Sigmoid colon (tissue), 7 donors: ENCODE measurements at regions of chr5 and their contacts with region 1.

Region 1: GRCh38 chr5:38556599-38557305 is at the start of gene LIFR:
- DNase-seq: peak; percentile 90
- H3K4me3 ChIP-seq: peak within 1 kb of the TSS; percentile 77 to 95 (median 82)
- H3K27ac ChIP-seq: peak within 1 kb of the TSS; percentile 93 to 98 (median 98)
- H3K4me1 ChIP-seq: peaks cover 0 to 29% (median 9%) of the 10 kb centered on the region in 4 donors
- H3K27me3 ChIP-seq: no peaks in the 10 kb centered on the region
- CTCF ChIP-seq: no peak
- EP300 ChIP-seq: peak in 1 of 4 donors; percentile 11
- POLR2A ChIP-seq: peak; percentile 64 to 71
- total RNA-seq, gene LIFR: 43.0 to 79.6 (median 66.5) TPM

Region 2: DNA sequence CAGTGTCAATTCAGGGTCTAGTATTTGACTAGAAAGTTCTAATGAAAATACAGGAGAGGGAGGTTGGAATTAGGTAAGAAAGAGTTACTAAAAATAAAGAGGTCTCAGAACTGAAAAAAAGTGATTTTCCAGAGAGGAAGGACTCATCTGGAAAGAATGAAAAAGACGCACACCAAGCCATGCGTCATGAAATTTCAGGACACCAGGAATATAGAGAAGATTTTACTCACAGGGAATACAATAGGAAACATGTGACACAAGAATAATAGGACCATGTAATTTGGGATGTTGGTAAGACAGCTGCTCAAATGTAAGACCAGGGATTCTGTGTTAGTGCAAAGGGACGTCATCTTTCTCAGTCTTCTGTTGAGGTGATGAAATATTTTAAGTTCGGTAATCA is 941.6 kb before region 1 on chr5:
- intact Hi-C with region 1: loop called (anchors 5 kb)
- DNase-seq: no peak
- H3K4me3 ChIP-seq: no peak overlapping the region
- H3K27ac ChIP-seq: peak overlapping the region; percentile 53 to 83 (median 73)
- H3K4me1 ChIP-seq: peaks cover 0 to 28% (median 17%) of the 10 kb centered on the region in 4 donors
- H3K27me3 ChIP-seq: no peaks in the 10 kb centered on the region
- CTCF ChIP-seq: no peak
- EP300 ChIP-seq: peak; percentile 36 to 90 (median 66)
- POLR2A ChIP-seq: no peak

Region 3: GRCh38 chr5:38441453-38442246 is 115.1 kb before region 1 on chr5:
- intact Hi-C with region 1: loop called (anchors 5 kb)
- DNase-seq: peak; percentile 94
- H3K4me3 ChIP-seq: no peak overlapping the region
- H3K27ac ChIP-seq: no peak overlapping the region
- H3K4me1 ChIP-seq: no peaks in the 10 kb centered on the region
- H3K27me3 ChIP-seq: no peaks in the 10 kb centered on the region
- CTCF ChIP-seq: peak; percentile 90 to 93 (median 91)
- EP300 ChIP-seq: no peak
- POLR2A ChIP-seq: no peak

Region 4: GRCh38 chr5:38467353-38468040 is 89.3 kb before region 1 on chr5:
- intact Hi-C with region 1: loop called (anchors 5 kb)
- DNase-seq: peak; percentile 84
- H3K4me3 ChIP-seq: no peak overlapping the region
- H3K27ac ChIP-seq: peak overlapping the region; percentile 71 to 81 (median 75)
- H3K4me1 ChIP-seq: peaks cover 0 to 67% (median 66%) of the 10 kb centered on the region in 4 donors
- H3K27me3 ChIP-seq: no peaks in the 10 kb centered on the region
- CTCF ChIP-seq: no peak
- EP300 ChIP-seq: no peak
- POLR2A ChIP-seq: no peak

Region 5: DNA sequence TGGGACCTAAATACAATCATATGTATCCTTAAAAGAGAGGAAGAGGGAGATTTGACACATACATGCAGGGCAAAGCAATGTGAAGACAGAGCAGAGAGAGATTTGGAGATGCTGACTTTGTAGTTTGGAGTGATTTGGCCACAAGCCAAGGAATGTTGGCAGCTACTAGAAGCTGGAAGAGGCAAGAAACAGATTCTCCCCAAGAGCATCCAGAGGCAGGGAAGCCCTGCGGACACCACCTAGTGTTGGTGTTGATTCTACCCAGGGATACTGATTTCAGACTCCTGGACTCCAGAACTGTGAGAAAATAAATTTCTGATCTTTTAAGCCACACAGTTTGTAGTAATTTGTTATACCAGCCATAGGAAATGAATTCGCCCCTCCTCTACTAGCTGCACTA is 224.2 kb after region 1 on chr5:
- intact Hi-C with region 1: loop called (anchors 10 kb)
- DNase-seq: peak; percentile 86
- H3K4me3 ChIP-seq: no peak overlapping the region
- H3K27ac ChIP-seq: no peak overlapping the region
- H3K4me1 ChIP-seq: peaks cover 0 to 32% (median 22%) of the 10 kb centered on the region in 4 donors
- H3K27me3 ChIP-seq: no peaks in the 10 kb centered on the region
- CTCF ChIP-seq: peak in 3 of 4 experiments; percentile 9 to 45 (median 38)
- EP300 ChIP-seq: no peak
- POLR2A ChIP-seq: no peak

Region 6: GRCh38 chr5:38845526-38846378 is 289.0 kb after region 1 on chr5 and contains the start of gene OSMR:
- intact Hi-C with region 1: loop called (anchors 2 kb)
- DNase-seq: peak; percentile 98
- H3K4me3 ChIP-seq: peak within 1 kb of the TSS; percentile 62 to 88 (median 88)
- H3K27ac ChIP-seq: peak within 1 kb of the TSS; percentile 88 to 97 (median 94)
- H3K4me1 ChIP-seq: peaks cover 0 to 48% (median 34%) of the 10 kb centered on the region in 4 donors
- H3K27me3 ChIP-seq: no peaks in the 10 kb centered on the region
- CTCF ChIP-seq: no peak
- EP300 ChIP-seq: peak; percentile 44 to 84 (median 79)
- POLR2A ChIP-seq: peak in 1 of 2 donors; percentile 37
- total RNA-seq, gene OSMR: 18.5 to 65.3 (median 39.0) TPM

Region 7: GRCh38 chr5:39074016-39074886 is 517.5 kb after region 1 on chr5 and contains the start of gene RICTOR:
- intact Hi-C with region 1: loop called (anchors 2 kb)
- DNase-seq: peak; percentile 92
- H3K4me3 ChIP-seq: peak within 1 kb of the TSS; percentile 84 to 97 (median 91)
- H3K27ac ChIP-seq: peak within 1 kb of the TSS; percentile 95 to 100 (median 98)
- H3K4me1 ChIP-seq: peaks cover 0 to 45% (median 17%) of the 10 kb centered on the region in 4 donors
- H3K27me3 ChIP-seq: no peaks in the 10 kb centered on the region
- CTCF ChIP-seq: no peak
- EP300 ChIP-seq: no peak
- POLR2A ChIP-seq: no peak
- total RNA-seq, gene RICTOR: 32.8 to 50.1 (median 41.2) TPM